ENCODE measurements at regions of chr7 and their contacts with region 1.

Region 1: GRCh38 chr7:150974468-150975391 is 3.4 kb downstream of the KCNH2 start:
- DNase-seq: peak; percentile 81
- H3K4me3 ChIP-seq: peak overlapping the region; percentile 18 to 68 (median 46)
- H3K27ac ChIP-seq: peak overlapping the region; percentile 84 to 97 (median 90)
- H3K4me1 ChIP-seq: peaks cover 0 to 95% (median 91%) of the 10 kb centered on the region in 4 donors
- H3K27me3 ChIP-seq: no peaks in the 10 kb centered on the region
- CTCF ChIP-seq: peak in 3 of 4 experiments; percentile 7 to 35 (median 28)
- EP300 ChIP-seq: no peak
- POLR2A ChIP-seq: peak in 1 of 2 donors; percentile 37

Region 2: DNA sequence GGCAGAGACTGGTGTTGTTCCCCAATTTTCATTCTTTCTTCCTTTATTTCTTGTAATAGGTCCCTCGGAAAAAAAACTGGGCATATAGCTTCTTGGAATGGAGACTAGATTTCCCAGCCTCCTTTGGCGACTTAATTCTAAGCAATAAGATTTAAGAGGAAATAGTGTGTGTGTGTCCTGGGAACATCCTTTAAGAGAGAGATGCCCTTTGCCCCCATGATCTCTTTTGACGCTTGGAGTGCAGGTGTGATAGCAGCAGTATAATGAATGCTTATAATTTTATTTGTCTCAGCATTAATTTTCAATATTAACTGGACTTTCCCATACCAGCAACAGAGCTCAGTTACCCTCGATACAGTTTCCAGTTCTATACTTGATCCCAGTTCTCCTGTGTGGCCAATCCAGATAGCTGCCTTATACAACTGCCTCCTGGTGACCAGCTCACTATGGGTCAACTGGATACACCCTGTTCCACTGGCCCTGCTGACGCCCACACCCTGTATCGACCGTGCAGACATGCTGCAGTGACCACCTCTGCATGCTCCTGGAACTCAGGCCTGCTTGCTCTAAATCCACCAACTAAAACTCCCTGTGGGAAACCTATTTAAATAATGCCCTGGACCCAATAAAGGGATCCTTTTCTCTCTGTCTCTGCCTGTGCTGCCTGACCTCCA is 160.3 kb before region 1 on chr7:
- intact Hi-C with region 1: no loop called
- DNase-seq: no peak
- H3K4me3 ChIP-seq: no peak overlapping the region
- H3K27ac ChIP-seq: no peak overlapping the region
- H3K4me1 ChIP-seq: no peaks in the 10 kb centered on the region
- H3K27me3 ChIP-seq: no peaks in the 10 kb centered on the region
- CTCF ChIP-seq: no peak
- EP300 ChIP-seq: no peak
- POLR2A ChIP-seq: no peak

Region 3: DNA sequence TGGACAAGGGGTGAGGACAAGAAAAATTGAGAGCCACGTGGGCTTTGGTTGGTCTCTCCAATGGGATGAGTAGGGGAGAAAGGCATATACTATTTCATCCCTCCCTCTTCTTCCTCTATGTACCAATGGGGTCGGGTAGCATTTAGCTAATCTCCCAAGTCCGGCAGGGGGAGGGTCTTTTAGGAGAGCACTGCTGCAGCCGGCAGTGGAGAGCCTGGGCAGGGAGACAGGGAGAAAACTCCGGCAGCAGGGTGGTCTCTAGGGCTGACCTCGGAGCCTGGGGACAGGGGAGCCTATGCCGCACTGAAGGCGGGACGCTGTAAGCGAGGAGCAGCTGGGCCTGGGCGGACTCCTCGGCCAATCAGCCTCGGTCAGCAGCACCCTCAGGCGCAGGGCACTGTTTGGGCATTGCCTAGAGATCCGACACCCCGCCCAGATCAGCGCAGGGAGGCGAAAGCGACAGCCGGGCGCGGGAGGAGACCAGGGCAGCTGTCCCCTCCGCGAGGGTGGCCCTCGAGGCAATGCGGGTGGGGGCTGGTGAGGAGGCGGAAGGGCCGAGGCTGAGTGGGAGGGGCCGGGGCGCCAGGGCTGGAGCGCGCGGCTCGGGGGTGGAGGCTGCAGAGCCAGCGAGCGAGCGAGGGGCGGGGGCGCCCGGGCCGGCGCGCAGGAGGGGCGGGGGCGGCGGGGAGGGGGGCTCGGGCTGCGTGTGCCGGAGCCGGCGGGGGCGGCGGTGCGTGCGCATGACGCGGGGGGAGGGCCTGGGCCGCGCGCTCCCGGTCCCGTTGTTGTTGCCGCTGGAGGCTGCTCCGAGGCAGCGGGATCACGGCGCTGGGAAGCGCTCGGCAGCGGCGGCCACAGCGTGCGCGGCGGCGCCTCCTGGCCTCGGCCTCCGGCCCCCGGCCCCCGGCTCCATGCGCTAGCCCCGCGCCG is 111.2 kb after region 1 on chr7 and contains the start of gene AGAP3:
- intact Hi-C with region 1: loop called (anchors 5 kb)
- DNase-seq: peak; percentile 94
- H3K4me3 ChIP-seq: peak within 1 kb of the TSS; percentile 59 to 89 (median 74)
- H3K27ac ChIP-seq: peak within 1 kb of the TSS; percentile 86 to 96 (median 88)
- H3K4me1 ChIP-seq: peaks cover 0 to 72% (median 67%) of the 10 kb centered on the region in 4 donors
- H3K27me3 ChIP-seq: no peaks in the 10 kb centered on the region
- CTCF ChIP-seq: no peak
- EP300 ChIP-seq: no peak
- POLR2A ChIP-seq: peak in 1 of 2 donors; percentile 69
- total RNA-seq, gene AGAP3: 34.2 to 89.7 (median 40.9) TPM

Region 4: GRCh38 chr7:151110941-151111645 is 136.4 kb after region 1 on chr7:
- intact Hi-C with region 1: no loop called
- DNase-seq: peak; percentile 90
- H3K4me3 ChIP-seq: no peak overlapping the region
- H3K27ac ChIP-seq: peak overlapping the region in 2 of 4 donors; percentile 10 to 70
- H3K4me1 ChIP-seq: peaks cover 0 to 54% (median 51%) of the 10 kb centered on the region in 4 donors
- H3K27me3 ChIP-seq: no peaks in the 10 kb centered on the region
- CTCF ChIP-seq: peak; percentile 83 to 88 (median 86)
- EP300 ChIP-seq: no peak
- POLR2A ChIP-seq: no peak

Measured in sigmoid colon (tissue), 7 donors.